CD4-positive, alpha-beta T cell (primary cell): ENCODE measurements at regions of chr2 and their contacts with region 1.

Region 1: GRCh38 chr2:230411570-230412370 is 4.2 kb upstream of the SP100 start:
- DNase-seq: peak in 13 of 14 experiments; percentile 29 to 81 (median 48)
- ATAC-seq: peak; percentile 68
- H3K4me3 ChIP-seq: peak overlapping the region; percentile 92
- H3K4me3 Mint-ChIP-seq: peak overlapping the region; percentile 97
- H3K27ac ChIP-seq: peak overlapping the region; percentile 83 to 89
- H3K27ac Mint-ChIP-seq: peak overlapping the region; percentile 93
- H3K4me1 ChIP-seq: peaks cover 68% of the 10 kb centered on the region
- H3K4me1 Mint-ChIP-seq: peaks cover 95% of the 10 kb centered on the region
- H3K27me3 ChIP-seq: no peaks in the 10 kb centered on the region
- H3K27me3 Mint-ChIP-seq: no peaks in the 10 kb centered on the region
- CTCF ChIP-seq: no peak

Region 2: GRCh38 chr2:229921892-229922445 is 489.8 kb before region 1 on chr2 and contains the start of gene TRIP12:
- CTCF ChIA-PET with region 1: no interaction called
- POLR2A ChIA-PET with region 1: no interaction called
- intact Hi-C with region 1: loop called in 1 of 2 experiments (anchors 5 kb)
- DNase-seq: peak; percentile 77 to 95 (median 86)
- ATAC-seq: peak; percentile 74
- H3K4me3 ChIP-seq: peak within 1 kb of the TSS; percentile 85
- H3K4me3 Mint-ChIP-seq: peak within 1 kb of the TSS; percentile 98
- H3K27ac ChIP-seq: peak within 1 kb of the TSS; percentile 97 to 98
- H3K27ac Mint-ChIP-seq: peak within 1 kb of the TSS; percentile 95
- H3K4me1 ChIP-seq: peaks cover 28% of the 10 kb centered on the region
- H3K4me1 Mint-ChIP-seq: peaks cover 55% of the 10 kb centered on the region
- H3K27me3 ChIP-seq: no peaks in the 10 kb centered on the region
- H3K27me3 Mint-ChIP-seq: peaks cover 5% of the 10 kb centered on the region
- CTCF ChIP-seq: no peak
- total RNA-seq, gene TRIP12: 151 to 178 TPM

Region 3: DNA sequence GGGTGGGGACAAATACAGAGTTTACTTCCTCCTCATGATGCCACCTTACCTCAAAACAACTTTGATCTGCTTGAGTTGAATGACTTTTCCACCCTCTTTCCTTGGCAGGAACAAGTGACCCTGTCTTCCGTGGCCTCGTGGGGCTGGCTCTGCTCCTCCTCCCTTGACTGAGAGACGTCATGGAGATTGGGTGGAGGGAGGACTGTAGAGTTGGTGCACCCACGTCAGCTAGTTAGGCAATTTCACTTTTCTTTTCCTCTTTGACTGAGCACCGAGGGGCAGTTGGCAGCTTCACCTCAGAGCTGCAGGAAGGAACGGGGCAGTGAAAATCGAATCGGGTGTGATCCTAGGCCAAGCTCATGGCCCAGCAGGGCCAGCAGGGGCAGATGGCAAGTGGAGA is 186.3 kb before region 1 on chr2 and contains the start of gene SP140:
- CTCF ChIA-PET with region 1: no interaction called
- POLR2A ChIA-PET with region 1: interaction called, 5 read pairs
- intact Hi-C with region 1: loop called in 1 of 2 experiments (anchors 5 kb)
- DNase-seq: peak; percentile 50 to 97 (median 70)
- ATAC-seq: peak; percentile 89
- H3K4me3 ChIP-seq: peak within 1 kb of the TSS; percentile 75
- H3K4me3 Mint-ChIP-seq: peak within 1 kb of the TSS; percentile 90
- H3K27ac ChIP-seq: peak within 1 kb of the TSS; percentile 64 to 89
- H3K27ac Mint-ChIP-seq: peak within 1 kb of the TSS; percentile 93
- H3K4me1 ChIP-seq: peaks cover 29% of the 10 kb centered on the region
- H3K4me1 Mint-ChIP-seq: peaks cover 64% of the 10 kb centered on the region
- H3K27me3 ChIP-seq: no peaks in the 10 kb centered on the region
- H3K27me3 Mint-ChIP-seq: no peaks in the 10 kb centered on the region
- CTCF ChIP-seq: no peak
- total RNA-seq, gene SP140: 51.2 to 55.1 TPM

Region 4: GRCh38 chr2:230319211-230319862 is 92.4 kb before region 1 on chr2:
- CTCF ChIA-PET with region 1: no interaction called
- POLR2A ChIA-PET with region 1: interaction called, 6 read pairs
- intact Hi-C with region 1: loop called in 1 of 2 experiments (anchors 5 kb)
- DNase-seq: peak; percentile 50 to 97 (median 69)
- ATAC-seq: peak; percentile 95
- H3K4me3 ChIP-seq: peak overlapping the region; percentile 24
- H3K4me3 Mint-ChIP-seq: peak overlapping the region; percentile 72
- H3K27ac ChIP-seq: peak overlapping the region; percentile 62 to 69
- H3K27ac Mint-ChIP-seq: peak overlapping the region; percentile 87
- H3K4me1 ChIP-seq: peaks cover 61% of the 10 kb centered on the region
- H3K4me1 Mint-ChIP-seq: peaks cover 88% of the 10 kb centered on the region
- H3K27me3 ChIP-seq: no peaks in the 10 kb centered on the region
- H3K27me3 Mint-ChIP-seq: no peaks in the 10 kb centered on the region
- CTCF ChIP-seq: no peak

Region 5: DNA sequence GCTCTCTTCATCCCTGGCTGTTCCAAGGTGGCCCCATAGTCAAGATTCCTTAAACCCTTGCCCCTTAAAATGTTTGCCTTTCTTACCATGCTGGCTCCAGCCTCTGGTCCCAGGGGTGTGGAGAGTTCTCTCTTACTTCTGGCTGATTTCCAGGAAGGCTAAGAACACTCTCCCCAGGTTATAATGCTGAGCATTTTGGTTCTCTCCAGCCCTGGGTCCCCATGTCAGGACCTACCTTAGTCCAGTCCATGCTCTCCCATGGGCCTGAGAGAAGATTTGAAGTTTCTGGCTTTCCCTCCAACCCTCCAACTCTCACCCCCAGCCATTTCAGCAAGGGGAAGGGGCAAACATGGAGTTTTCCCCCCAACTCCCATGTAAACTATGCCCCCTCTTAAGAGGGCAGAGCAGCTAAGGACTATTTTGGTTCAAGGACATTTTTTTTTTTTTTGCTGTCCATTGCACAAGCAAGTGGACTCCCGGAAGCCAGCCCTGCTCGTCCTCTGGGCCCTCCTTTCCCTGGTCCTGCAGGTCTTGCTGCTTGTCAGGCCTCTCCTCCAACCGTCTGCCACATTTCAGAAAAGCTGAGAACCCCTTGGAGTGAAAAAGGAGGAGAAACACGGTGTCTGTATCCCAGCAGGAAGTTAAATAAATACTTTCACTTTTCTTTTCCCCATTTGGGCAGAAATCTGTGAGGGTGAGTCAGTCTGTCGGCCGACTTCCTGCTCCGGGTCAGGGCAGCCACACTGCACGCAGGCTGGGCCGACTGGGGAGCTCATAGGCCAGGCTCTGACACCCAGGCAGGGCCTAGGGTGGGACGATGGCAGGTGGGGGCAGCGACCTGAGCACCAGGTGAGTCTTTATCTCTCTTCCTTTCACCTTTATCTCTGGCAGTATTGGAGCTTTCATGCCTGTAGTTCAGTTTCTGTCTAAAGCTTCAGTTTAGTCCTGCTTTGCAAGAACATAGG is 85.0 kb before region 1 on chr2 and contains the start of gene SP140L:
- CTCF ChIA-PET with region 1: no interaction called
- POLR2A ChIA-PET with region 1: interaction called, 33 read pairs
- intact Hi-C with region 1: loop called in 1 of 2 experiments (anchors 5 kb)
- DNase-seq: peak; percentile 63 to 91 (median 77)
- ATAC-seq: peak; percentile 99
- H3K4me3 ChIP-seq: peak within 1 kb of the TSS; percentile 70
- H3K4me3 Mint-ChIP-seq: peak within 1 kb of the TSS; percentile 90
- H3K27ac ChIP-seq: peak within 1 kb of the TSS; percentile 89 to 92
- H3K27ac Mint-ChIP-seq: peak within 1 kb of the TSS; percentile 98
- H3K4me1 ChIP-seq: peaks cover 45% of the 10 kb centered on the region
- H3K4me1 Mint-ChIP-seq: peaks cover 85% of the 10 kb centered on the region
- H3K27me3 ChIP-seq: no peaks in the 10 kb centered on the region
- H3K27me3 Mint-ChIP-seq: no peaks in the 10 kb centered on the region
- CTCF ChIP-seq: no peak
- total RNA-seq, gene SP140L: 55.3 to 64.1 TPM

Region 6: DNA sequence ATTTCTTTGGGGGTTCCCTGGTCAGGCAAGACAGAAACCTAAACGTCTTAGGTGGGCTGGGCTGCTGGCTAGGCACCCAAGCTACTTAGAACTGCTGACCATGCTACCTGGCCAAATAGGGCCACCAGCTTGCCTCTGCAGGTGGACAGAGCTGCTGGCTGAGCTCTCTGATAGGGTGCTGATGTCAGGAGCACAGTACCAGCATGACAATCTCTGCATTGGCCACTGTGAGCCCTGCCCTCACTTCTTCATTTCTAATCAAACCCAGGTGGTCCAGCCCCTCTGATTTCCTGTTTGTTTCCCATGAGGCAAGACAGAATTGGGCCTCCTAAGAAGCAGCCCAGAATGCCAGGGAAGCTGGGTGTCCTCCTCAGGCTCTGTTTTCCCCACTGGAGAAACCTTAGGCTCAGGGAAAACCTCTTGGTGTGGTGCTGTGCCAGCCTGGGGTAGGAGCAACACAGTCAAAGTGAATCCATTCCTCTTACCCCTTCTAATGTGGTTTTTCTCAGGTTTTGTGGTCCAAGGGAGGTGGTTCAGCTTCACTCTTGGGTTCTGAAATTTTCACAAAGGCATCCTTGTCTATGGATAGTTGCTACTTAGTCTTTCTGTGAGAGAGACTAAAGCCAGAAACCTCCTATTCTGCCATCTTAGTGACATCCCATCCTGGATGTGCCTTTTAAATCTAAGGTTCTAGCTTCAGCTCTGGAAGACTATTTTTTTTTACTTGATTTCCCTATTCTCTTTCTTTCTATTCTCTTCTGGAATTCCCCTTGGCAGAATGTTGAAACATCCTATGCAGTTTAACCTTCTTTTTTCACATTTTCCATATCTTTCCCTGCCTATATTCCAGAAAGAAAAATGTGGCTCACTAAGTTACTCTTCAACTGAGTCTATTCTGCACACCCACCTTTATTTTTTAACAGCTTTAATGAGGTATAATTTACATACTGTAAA is 19.5 kb after region 1 on chr2:
- CTCF ChIA-PET with region 1: no interaction called
- POLR2A ChIA-PET with region 1: interaction called, 3 read pairs
- intact Hi-C with region 1: loop called in 1 of 2 experiments (anchors 2 kb)
- DNase-seq: peak in 3 of 14 experiments; percentile 21 to 48 (median 39)
- ATAC-seq: peak; percentile 71
- H3K4me3 ChIP-seq: no peak overlapping the region
- H3K4me3 Mint-ChIP-seq: peak overlapping the region; percentile 48
- H3K27ac ChIP-seq: peak overlapping the region in 1 of 2 donors; percentile 10
- H3K27ac Mint-ChIP-seq: peak overlapping the region; percentile 32
- H3K4me1 ChIP-seq: peaks cover 17% of the 10 kb centered on the region
- H3K4me1 Mint-ChIP-seq: peaks cover 59% of the 10 kb centered on the region
- H3K27me3 ChIP-seq: no peaks in the 10 kb centered on the region
- H3K27me3 Mint-ChIP-seq: no peaks in the 10 kb centered on the region
- CTCF ChIP-seq: no peak

Region 7: GRCh38 chr2:230447455-230448451 is 36.0 kb after region 1 on chr2:
- CTCF ChIA-PET with region 1: no interaction called
- POLR2A ChIA-PET with region 1: no interaction called
- intact Hi-C with region 1: loop called in 1 of 2 experiments (anchors 5 kb)
- DNase-seq: peak in 3 of 14 experiments; percentile 62 to 69 (median 66)
- ATAC-seq: peak; percentile 86
- H3K4me3 ChIP-seq: no peak overlapping the region
- H3K4me3 Mint-ChIP-seq: peak overlapping the region; percentile 3
- H3K27ac ChIP-seq: peak overlapping the region; percentile 41 to 42
- H3K27ac Mint-ChIP-seq: peak overlapping the region; percentile 75
- H3K4me1 ChIP-seq: peaks cover 33% of the 10 kb centered on the region
- H3K4me1 Mint-ChIP-seq: peaks cover 60% of the 10 kb centered on the region
- H3K27me3 ChIP-seq: no peaks in the 10 kb centered on the region
- H3K27me3 Mint-ChIP-seq: no peaks in the 10 kb centered on the region
- CTCF ChIP-seq: no peak

Region 8: GRCh38 chr2:230541934-230542380 is 130.2 kb after region 1 on chr2:
- CTCF ChIA-PET with region 1: no interaction called
- POLR2A ChIA-PET with region 1: no interaction called
- intact Hi-C with region 1: no loop called
- DNase-seq: no peak
- ATAC-seq: no peak
- H3K4me3 ChIP-seq: no peak overlapping the region
- H3K4me3 Mint-ChIP-seq: no peak overlapping the region
- H3K27ac ChIP-seq: no peak overlapping the region
- H3K27ac Mint-ChIP-seq: no peak overlapping the region
- H3K4me1 ChIP-seq: no peaks in the 10 kb centered on the region
- H3K4me1 Mint-ChIP-seq: peaks cover 9% of the 10 kb centered on the region
- H3K27me3 ChIP-seq: no peaks in the 10 kb centered on the region
- H3K27me3 Mint-ChIP-seq: no peaks in the 10 kb centered on the region
- CTCF ChIP-seq: no peak

Region 9: DNA sequence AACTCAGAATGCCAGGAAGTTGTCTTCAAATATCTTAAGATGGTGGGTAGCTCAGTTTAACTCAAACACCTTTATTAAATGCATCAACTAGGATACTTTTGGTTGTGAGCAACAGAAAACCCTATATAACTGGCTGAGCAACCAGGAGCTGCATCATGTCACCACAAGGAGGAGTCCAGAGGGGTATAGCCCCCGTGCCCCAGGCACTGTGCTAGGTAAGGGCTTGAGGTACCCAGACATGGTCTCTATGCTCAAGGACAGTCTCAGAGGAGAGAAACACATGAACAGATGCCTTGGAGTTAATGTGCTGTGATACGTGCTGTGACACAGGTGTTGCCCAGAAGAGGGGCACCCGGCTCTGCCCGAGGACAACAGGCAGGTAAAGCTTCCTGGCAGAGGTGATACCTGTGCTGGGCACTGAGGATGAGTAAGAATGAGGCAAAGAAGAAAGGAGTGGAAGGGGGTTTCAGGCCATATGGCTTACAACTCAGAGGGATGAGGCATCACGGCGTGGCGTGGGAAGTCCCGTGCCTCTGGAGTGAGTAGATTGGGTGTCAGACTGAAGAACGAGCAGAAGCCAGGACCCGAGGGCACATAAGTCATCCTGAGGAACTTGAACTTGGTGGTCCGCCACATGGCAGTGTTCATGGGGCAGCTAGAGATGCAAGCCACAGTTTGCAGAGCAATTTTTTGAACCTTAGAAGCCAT is 268.8 kb after region 1 on chr2:
- CTCF ChIA-PET with region 1: no interaction called
- POLR2A ChIA-PET with region 1: no interaction called
- intact Hi-C with region 1: no loop called
- DNase-seq: no peak
- ATAC-seq: no peak
- H3K4me3 ChIP-seq: no peak overlapping the region
- H3K4me3 Mint-ChIP-seq: no peak overlapping the region
- H3K27ac ChIP-seq: no peak overlapping the region
- H3K27ac Mint-ChIP-seq: no peak overlapping the region
- H3K4me1 ChIP-seq: peaks cover 12% of the 10 kb centered on the region
- H3K4me1 Mint-ChIP-seq: peaks cover 28% of the 10 kb centered on the region
- H3K27me3 ChIP-seq: no peaks in the 10 kb centered on the region
- H3K27me3 Mint-ChIP-seq: no peaks in the 10 kb centered on the region
- CTCF ChIP-seq: no peak

Region 10: DNA sequence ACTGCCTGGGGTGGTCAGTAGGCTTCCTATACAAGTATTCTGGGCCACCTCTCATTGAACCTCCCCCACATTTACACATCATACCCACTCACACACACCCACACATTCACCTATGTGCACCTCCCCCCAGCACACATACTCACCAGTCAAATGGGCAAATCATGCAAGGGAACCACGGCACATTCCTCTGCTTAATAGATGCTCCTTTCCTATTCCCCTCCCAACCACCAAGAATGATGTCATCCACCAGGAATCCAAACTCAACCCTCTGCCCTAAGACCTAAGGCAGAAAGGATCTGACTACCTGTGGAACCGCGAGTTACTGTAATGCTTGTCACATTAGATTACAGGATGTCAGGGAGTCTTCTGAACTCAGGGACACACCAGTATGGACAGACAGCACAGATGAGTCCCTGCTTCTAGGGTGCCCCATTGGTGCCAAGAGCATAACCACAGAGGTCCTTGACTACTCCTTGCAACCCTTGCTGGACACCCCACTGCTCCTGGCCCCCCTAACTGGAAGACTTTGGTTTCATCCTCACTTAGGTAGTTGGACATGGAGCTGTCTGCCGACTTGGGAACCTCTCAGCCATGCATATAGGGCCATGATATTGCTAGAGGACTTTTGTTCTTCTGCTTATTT is 279.4 kb after region 1 on chr2:
- CTCF ChIA-PET with region 1: no interaction called
- POLR2A ChIA-PET with region 1: no interaction called
- intact Hi-C with region 1: no loop called
- DNase-seq: no peak
- ATAC-seq: no peak
- H3K4me3 ChIP-seq: no peak overlapping the region
- H3K4me3 Mint-ChIP-seq: no peak overlapping the region
- H3K27ac ChIP-seq: no peak overlapping the region
- H3K27ac Mint-ChIP-seq: no peak overlapping the region
- H3K4me1 ChIP-seq: no peaks in the 10 kb centered on the region
- H3K4me1 Mint-ChIP-seq: peaks cover 6% of the 10 kb centered on the region
- H3K27me3 ChIP-seq: no peaks in the 10 kb centered on the region
- H3K27me3 Mint-ChIP-seq: no peaks in the 10 kb centered on the region
- CTCF ChIP-seq: no peak

Region 11: DNA sequence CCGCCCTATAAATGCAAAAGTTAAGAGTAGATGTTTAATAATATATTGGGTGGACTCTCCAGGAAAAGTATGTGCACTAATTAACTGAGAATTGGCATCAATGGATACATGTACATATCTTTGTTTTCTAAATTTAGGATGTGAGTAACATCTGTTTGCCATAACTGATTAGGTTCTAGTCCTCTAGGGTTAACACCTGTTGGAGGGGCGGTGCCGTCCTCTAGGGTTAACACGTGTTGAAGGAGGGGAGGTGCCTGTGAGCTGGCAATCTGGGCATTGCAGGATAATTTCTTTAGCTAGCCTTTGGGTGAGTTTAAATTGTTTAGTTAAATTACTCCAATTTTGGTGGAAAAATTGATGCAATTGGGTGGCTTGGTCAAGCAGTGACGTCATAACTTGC is 682.2 kb after region 1 on chr2:
- CTCF ChIA-PET with region 1: no interaction called
- POLR2A ChIA-PET with region 1: no interaction called
- intact Hi-C with region 1: no loop called
- DNase-seq: no peak
- ATAC-seq: no peak
- H3K4me3 ChIP-seq: no peak overlapping the region
- H3K4me3 Mint-ChIP-seq: no peak overlapping the region
- H3K27ac ChIP-seq: no peak overlapping the region
- H3K27ac Mint-ChIP-seq: no peak overlapping the region
- H3K4me1 ChIP-seq: no peaks in the 10 kb centered on the region
- H3K4me1 Mint-ChIP-seq: no peaks in the 10 kb centered on the region
- H3K27me3 ChIP-seq: no peaks in the 10 kb centered on the region
- H3K27me3 Mint-ChIP-seq: no peaks in the 10 kb centered on the region
- CTCF ChIP-seq: no peak